CD4-positive, alpha-beta T cell (primary cell): ENCODE measurements at regions of chr16 and their contacts with region 1.

Region 1: DNA sequence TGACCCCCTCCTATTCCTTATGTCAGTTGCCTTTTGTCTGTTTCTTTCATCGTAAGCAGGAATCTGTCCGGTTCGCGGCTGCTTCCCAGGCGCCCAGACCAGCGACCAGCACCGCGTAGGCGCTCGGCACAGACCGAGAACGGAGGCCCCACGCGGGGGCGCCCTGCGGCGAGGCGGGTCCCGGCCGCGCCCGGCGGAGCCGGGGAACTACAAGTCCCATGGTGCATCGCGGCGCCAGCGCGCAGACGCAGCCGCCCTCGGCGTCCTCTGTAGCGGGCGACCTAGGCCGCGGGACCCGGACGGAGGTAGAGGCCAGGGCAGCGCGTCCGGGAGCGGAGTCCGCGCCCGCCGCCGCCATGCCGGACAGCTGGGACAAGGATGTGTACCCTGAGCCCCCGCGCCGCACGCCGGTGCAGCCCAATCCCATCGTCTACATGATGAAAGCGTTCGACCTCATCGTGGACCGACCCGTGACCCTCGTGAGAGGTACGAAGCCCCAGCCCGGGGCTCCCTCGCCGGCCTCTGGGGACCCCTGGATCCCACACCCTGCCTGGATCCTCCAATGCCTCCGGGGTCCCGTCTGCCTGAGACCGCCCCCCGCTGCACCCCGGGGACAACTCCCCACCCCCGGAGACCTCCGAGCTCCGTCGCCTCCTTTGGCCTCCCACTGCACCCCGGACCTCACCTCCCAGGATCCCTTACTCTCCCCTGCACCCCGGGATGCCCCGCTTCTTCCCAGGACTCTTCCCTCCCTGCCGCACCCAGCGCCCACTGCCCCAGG is at the start of gene NDUFB10:
- DNase-seq: peak; percentile 81 to 96 (median 92)
- ATAC-seq: peak; percentile 86
- H3K4me3 ChIP-seq: peak within 1 kb of the TSS; percentile 94
- H3K4me3 Mint-ChIP-seq: peak within 1 kb of the TSS; percentile 91
- H3K27ac ChIP-seq: peak within 1 kb of the TSS; percentile 66 to 72
- H3K27ac Mint-ChIP-seq: peak within 1 kb of the TSS; percentile 98
- H3K4me1 ChIP-seq: peaks cover 55% of the 10 kb centered on the region
- H3K4me1 Mint-ChIP-seq: peaks cover 42% of the 10 kb centered on the region
- H3K27me3 ChIP-seq: no peaks in the 10 kb centered on the region
- H3K27me3 Mint-ChIP-seq: no peaks in the 10 kb centered on the region
- CTCF ChIP-seq: peak; percentile 83
- total RNA-seq, gene NDUFB10: 40.7 to 41.1 TPM

Region 2: DNA sequence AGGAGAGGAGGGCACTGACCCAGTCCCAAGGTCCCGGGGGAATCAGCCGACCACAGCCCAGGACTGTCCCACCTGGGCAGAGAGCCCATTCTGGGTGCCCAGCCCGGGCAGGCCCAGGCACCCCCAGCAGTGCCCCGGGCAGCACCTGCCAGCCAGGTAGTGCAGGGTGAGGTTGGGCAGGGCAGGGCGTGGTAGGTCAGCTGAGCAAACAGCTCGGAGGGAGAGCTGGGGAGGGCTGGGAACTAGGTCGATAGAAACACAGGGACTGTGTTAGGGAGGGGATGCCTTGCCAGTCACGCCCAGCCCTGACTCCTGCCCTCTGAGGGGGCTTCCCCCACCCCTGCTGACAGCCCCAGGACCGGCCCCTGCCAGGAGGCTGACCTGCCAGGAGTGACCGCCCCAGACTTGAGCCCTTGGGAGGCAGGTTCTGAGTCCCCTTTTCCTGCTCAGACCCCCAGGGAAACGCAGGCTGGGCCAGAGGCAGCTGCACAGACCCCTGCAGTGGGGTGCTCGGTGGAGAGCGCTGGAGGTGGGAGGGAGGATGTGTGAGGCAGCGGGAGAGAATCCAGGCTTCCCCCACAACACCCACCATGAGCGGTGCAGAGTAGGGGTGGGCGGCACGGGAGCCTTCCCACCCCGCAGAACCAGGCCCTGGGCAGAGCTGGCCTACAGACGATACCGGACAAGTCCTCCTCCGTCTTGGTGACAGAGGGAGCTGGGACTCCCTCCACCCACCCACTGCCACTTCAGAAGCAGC is 46.0 kb before region 1 on chr16:
- CTCF ChIA-PET with region 1: no interaction called
- POLR2A ChIA-PET with region 1: no interaction called
- intact Hi-C with region 1: no loop called
- DNase-seq: no peak
- ATAC-seq: no peak
- H3K4me3 ChIP-seq: no peak overlapping the region
- H3K4me3 Mint-ChIP-seq: no peak overlapping the region
- H3K27ac ChIP-seq: no peak overlapping the region
- H3K27ac Mint-ChIP-seq: no peak overlapping the region
- H3K4me1 ChIP-seq: peaks cover 3% of the 10 kb centered on the region
- H3K4me1 Mint-ChIP-seq: no peaks in the 10 kb centered on the region
- H3K27me3 ChIP-seq: peaks cover 19 to 44% of the 10 kb centered on the region in 2 experiments
- H3K27me3 Mint-ChIP-seq: peaks cover 30% of the 10 kb centered on the region
- CTCF ChIP-seq: no peak

Region 3: DNA sequence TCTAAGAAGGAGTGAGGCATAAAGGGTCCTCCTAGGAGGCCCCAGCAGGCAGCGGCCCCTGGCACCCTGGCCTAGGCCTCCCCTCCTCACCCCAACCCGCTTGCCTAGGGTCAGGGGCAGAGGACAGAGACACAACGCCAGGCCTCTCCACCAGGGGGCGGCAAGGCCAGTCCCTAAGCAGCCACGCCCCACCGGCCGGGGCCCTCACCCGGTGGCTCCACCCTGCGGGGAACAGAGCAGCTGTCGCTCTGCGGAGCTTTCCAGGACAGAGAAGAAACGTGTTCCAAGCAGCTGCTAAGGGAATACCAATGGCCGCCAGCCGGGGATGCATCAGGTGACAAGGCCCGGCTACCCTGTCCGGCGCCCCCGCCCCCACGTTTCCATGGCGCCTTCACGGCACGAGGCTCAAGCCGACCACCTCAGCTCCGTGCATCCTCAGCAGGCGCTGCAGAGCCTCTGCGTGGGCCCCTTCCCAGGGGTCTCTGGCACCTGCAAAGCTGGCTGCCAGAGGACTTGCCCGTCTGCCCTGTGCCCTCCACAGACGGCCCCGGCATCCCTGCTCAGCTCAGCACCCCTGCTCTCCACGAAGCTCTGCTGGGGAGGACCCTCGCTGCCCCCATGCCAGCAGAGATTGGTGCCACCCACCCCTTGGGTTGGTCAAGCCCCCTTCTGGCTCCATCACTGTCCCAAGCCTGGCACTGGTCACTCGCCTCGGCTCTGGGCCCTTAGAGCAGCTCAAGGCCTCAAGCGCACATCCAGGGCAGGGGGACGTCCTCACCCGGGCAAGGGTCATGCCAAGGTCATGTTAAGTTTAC is 44.6 kb after region 1 on chr16:
- CTCF ChIA-PET with region 1: interaction called, 10 read pairs
- POLR2A ChIA-PET with region 1: interaction called, 8 read pairs
- intact Hi-C with region 1: loop called in 1 of 2 experiments (anchors 2 kb)
- DNase-seq: peak; percentile 78 to 92 (median 84)
- ATAC-seq: peak; percentile 98
- H3K4me3 ChIP-seq: no peak overlapping the region
- H3K4me3 Mint-ChIP-seq: no peak overlapping the region
- H3K27ac ChIP-seq: no peak overlapping the region
- H3K27ac Mint-ChIP-seq: no peak overlapping the region
- H3K4me1 ChIP-seq: peaks cover 57% of the 10 kb centered on the region
- H3K4me1 Mint-ChIP-seq: peaks cover 32% of the 10 kb centered on the region
- H3K27me3 ChIP-seq: no peaks in the 10 kb centered on the region
- H3K27me3 Mint-ChIP-seq: no peaks in the 10 kb centered on the region
- CTCF ChIP-seq: peak; percentile 78

Region 4: DNA sequence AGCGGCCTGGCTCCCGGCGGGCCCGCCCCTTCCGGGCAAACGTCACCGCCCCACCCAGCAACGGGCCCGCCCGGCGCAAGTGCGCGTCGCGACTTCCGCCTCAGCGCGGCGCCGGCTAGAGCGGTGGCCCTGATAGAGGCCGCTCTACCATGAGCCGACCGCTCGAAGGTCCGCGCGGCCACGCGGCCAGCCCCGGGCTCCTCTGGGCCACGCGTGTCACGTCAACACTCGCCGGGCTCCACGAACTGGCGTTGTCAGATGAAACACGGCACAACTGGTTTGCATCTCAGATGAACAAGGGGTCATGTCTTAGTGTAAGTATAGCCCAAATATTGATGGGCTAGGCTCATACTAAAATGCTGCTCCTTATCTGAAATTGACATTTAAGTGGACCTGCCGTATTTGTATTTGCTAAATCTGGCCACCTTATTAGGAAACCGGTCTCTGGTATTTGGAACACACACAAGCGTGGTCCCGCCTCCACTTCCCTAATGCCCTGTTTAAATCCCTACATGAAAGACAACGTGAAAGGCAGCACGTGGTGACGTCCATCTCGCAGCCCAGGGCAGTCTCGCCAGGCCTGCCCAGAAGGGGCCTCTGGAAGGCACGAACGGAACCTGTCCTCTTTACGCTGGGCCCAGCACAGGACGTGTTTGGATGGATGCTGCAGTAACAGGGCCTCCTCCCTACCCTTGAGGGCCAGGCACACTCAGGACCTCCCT is 50.5 kb after region 1 on chr16 and contains the start of gene ZNF598:
- CTCF ChIA-PET with region 1: no interaction called
- POLR2A ChIA-PET with region 1: interaction called, 8 read pairs
- intact Hi-C with region 1: loop called in 1 of 2 experiments (anchors 2 kb)
- DNase-seq: peak; percentile 47 to 93 (median 75)
- ATAC-seq: peak; percentile 91
- H3K4me3 ChIP-seq: peak within 1 kb of the TSS; percentile 68
- H3K4me3 Mint-ChIP-seq: peak within 1 kb of the TSS; percentile 93
- H3K27ac ChIP-seq: peak within 1 kb of the TSS; percentile 78 to 89
- H3K27ac Mint-ChIP-seq: peak within 1 kb of the TSS; percentile 92
- H3K4me1 ChIP-seq: peaks cover 52% of the 10 kb centered on the region
- H3K4me1 Mint-ChIP-seq: peaks cover 40% of the 10 kb centered on the region
- H3K27me3 ChIP-seq: no peaks in the 10 kb centered on the region
- H3K27me3 Mint-ChIP-seq: no peaks in the 10 kb centered on the region
- CTCF ChIP-seq: no peak
- total RNA-seq, gene ZNF598: 39.7 to 43.6 TPM

Region 5: DNA sequence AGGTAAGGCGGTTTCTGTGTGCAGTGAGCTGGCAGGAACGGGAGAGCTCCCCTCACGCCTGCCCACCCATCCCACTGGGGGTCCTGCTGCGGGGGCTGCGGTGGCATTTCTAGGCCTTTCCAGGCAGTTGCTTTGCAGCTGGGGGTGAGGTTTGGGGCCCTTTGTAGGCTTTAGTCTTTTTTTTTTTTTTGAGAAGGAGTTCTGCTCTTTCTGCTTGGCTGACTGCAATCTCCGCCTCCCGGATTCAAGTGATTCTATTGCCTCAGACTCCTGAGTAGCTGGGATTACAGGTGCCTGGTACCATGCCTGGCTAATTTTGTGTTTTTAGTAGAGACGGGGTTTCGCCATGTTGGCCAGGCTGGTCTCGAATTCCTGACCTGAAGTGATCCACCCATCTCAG is 99.4 kb after region 1 on chr16:
- CTCF ChIA-PET with region 1: no interaction called
- POLR2A ChIA-PET with region 1: no interaction called
- intact Hi-C with region 1: no loop called
- DNase-seq: no peak
- ATAC-seq: no peak
- H3K4me3 ChIP-seq: no peak overlapping the region
- H3K4me3 Mint-ChIP-seq: no peak overlapping the region
- H3K27ac ChIP-seq: no peak overlapping the region
- H3K27ac Mint-ChIP-seq: no peak overlapping the region
- H3K4me1 ChIP-seq: no peaks in the 10 kb centered on the region
- H3K4me1 Mint-ChIP-seq: no peaks in the 10 kb centered on the region
- H3K27me3 ChIP-seq: no peaks in the 10 kb centered on the region
- H3K27me3 Mint-ChIP-seq: no peaks in the 10 kb centered on the region
- CTCF ChIP-seq: no peak